Natural killer cell (primary cell): ENCODE measurements at regions of chr22 and their contacts with region 1.

Region 1: DNA sequence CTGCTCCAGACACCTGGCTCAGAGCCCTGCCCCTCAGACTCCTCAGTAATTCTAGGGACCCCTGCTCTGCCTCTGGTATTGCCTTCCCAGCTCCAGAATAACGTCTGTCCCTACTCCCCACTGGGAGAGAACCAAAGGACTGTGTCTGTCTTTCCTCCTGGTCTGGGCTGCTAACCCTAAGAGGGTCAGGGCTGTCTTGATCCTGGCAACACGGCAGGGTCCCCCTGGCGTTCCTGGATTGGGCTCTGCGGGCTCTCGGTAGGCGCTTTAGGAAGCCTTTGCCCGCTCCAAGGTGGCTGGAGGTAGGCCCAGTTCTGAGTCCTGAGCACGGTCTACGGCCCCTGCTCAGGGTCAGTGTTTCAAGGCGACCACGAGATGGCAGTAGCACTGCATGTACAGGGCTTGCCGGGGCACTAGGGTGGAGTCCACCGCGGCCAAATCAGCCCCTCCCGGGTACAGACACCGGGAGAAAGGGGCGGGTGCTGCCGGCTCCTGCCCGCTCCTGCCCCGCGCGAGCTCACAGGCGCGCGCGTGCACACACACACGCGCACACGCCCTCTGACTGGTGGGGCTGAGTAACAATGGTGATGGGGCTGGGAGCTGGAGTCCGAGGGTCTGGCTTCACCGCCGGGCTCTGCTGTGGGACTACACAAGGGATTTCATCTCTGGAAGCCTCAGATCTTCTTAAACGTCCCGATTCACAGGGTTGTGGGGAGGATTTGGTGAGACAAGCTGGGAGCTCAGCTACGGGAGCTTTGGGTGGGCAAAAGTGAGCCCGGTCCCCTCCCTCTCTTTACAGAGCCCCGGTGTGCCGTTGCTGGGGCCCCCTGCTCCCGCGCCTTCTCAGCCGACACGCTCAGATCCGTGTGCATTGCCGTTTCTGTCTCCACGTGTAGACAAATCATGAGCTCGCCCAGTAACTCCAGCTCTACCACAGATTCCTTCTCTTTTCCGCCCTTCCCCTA is 30.1 kb upstream of the HMOX1 start:
- DNase-seq: peak; percentile 77 to 92
- ATAC-seq: peak; percentile 91 to 93 (median 92)
- H3K4me3 ChIP-seq: peak overlapping the region; percentile 39
- H3K4me3 Mint-ChIP-seq: peak overlapping the region; percentile 79
- H3K27ac ChIP-seq: peak overlapping the region; percentile 18
- H3K27ac Mint-ChIP-seq: peak overlapping the region in 1 of 2 donors; percentile 72
- H3K4me1 ChIP-seq: peaks cover 38% of the 10 kb centered on the region
- H3K4me1 Mint-ChIP-seq: peaks cover 16 to 27% of the 10 kb centered on the region in 2 donors
- H3K27me3 ChIP-seq: peaks cover 3% of the 10 kb centered on the region
- H3K27me3 Mint-ChIP-seq: peaks cover 0 to 10% of the 10 kb centered on the region in 2 donors
- CTCF ChIP-seq: peak; percentile 88

Region 2: DNA sequence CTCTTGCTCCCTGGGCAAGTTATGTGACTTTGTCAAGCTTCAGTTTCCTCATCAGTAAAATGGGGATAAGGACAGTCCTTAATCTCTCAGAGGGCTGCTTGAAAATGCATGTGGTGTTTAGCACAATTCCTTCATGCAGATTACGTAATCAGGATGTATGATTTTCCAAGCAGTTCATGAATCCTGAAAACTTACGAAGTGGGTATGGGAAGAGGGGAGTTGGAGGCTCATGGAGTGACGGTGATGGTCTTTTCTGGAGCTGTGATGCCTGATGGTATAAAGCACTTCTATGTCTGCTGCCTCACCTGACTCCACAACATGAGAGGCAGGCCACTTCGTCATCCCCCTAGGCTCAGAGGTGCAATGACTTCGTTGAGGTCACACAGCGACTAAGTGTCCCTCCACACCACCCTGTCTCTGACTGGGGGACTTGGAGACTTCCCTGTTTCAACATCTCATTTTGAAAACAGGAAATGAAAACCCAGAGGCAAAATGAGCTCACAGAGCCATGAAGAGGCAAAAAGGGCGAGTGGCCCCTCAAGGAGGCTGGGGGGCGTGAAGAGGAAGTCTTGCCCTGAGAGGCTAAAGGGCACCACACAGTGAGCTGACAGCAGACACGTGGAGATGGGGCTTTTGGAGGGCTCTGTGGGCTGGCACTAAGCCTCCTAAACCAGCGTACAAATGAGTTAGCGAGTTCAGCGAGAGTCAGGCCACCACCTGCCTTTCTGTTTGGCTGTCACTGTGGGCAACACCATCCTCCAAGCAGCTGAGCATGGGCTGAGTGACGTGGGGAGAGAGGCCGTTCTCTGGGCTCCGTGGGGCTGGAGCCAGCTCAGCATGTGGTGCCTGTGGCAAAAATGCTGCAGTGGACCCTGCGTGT is 59.2 kb after region 1 on chr22:
- intact Hi-C with region 1: loop called (anchors 5 kb)
- DNase-seq: peak; percentile 27 to 46
- ATAC-seq: peak; percentile 84 to 91 (median 84)
- H3K4me3 ChIP-seq: no peak overlapping the region
- H3K4me3 Mint-ChIP-seq: peak overlapping the region; percentile 31
- H3K27ac ChIP-seq: peak overlapping the region; percentile 87
- H3K27ac Mint-ChIP-seq: peak overlapping the region; percentile 62 to 71
- H3K4me1 ChIP-seq: peaks cover 24% of the 10 kb centered on the region
- H3K4me1 Mint-ChIP-seq: peaks cover 6 to 21% of the 10 kb centered on the region in 2 donors
- H3K27me3 ChIP-seq: no peaks in the 10 kb centered on the region
- H3K27me3 Mint-ChIP-seq: no peaks in the 10 kb centered on the region
- CTCF ChIP-seq: no peak

Region 3: GRCh38 chr22:35582861-35583670 is 232.2 kb after region 1 on chr22:
- intact Hi-C with region 1: loop called (anchors 1 kb)
- DNase-seq: peak; percentile 44 to 83
- ATAC-seq: peak; percentile 60 to 82 (median 71)
- H3K4me3 ChIP-seq: no peak overlapping the region
- H3K4me3 Mint-ChIP-seq: no peak overlapping the region
- H3K27ac ChIP-seq: no peak overlapping the region
- H3K27ac Mint-ChIP-seq: no peak overlapping the region
- H3K4me1 ChIP-seq: no peaks in the 10 kb centered on the region
- H3K4me1 Mint-ChIP-seq: peaks cover 0 to 4% of the 10 kb centered on the region in 2 donors
- H3K27me3 ChIP-seq: no peaks in the 10 kb centered on the region
- H3K27me3 Mint-ChIP-seq: peaks cover 0 to 2% of the 10 kb centered on the region in 2 donors
- CTCF ChIP-seq: peak; percentile 95

Region 4: DNA sequence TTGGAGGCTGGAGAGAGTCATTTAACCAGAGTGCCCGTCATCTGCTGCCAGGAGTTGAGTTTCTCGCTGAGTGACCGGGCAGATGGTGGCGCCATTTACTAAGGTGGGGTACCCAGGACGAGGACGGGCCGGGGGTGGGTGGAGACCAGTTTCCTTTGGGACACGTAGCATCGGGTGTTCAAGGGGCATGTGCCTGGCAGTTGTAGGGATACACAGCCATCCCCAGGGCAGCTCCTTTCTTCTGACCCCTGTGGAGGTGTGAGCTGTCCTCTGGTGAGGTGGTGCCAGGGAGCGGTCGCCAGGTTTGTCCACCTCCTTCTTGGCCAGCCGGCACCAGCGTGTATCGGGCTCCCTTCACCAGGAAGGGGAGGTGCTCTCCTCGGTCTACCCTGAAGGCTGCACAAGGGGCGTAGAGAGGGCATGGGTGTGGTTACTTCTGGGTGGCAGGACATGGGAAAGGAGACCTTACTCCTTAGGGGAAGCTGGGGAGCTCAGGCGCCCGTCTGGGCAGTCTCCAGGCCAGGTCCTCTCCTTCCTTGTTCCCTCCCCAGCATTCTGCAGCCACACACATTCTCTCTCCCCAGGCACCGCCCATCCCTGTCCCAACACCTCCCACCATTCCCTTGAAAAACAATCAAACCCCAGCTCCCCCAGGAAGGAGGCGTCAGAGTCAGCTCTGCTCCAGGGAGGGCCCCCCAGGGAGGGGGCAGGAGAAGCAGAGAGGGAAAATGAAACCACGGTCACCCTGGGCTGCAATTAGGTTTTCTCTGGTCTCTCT is 276.6 kb after region 1 on chr22:
- intact Hi-C with region 1: loop called (anchors 1 kb)
- DNase-seq: peak; percentile 40 to 73
- ATAC-seq: peak; percentile 50 to 54 (median 51)
- H3K4me3 ChIP-seq: peak overlapping the region; percentile 42
- H3K4me3 Mint-ChIP-seq: peak overlapping the region; percentile 79
- H3K27ac ChIP-seq: no peak overlapping the region
- H3K27ac Mint-ChIP-seq: peak overlapping the region in 1 of 2 donors; percentile 81
- H3K4me1 ChIP-seq: peaks cover 23% of the 10 kb centered on the region
- H3K4me1 Mint-ChIP-seq: peaks cover 20 to 32% of the 10 kb centered on the region in 2 donors
- H3K27me3 ChIP-seq: no peaks in the 10 kb centered on the region
- H3K27me3 Mint-ChIP-seq: peaks cover 0 to 6% of the 10 kb centered on the region in 2 donors
- CTCF ChIP-seq: peak; percentile 17

Region 5: DNA sequence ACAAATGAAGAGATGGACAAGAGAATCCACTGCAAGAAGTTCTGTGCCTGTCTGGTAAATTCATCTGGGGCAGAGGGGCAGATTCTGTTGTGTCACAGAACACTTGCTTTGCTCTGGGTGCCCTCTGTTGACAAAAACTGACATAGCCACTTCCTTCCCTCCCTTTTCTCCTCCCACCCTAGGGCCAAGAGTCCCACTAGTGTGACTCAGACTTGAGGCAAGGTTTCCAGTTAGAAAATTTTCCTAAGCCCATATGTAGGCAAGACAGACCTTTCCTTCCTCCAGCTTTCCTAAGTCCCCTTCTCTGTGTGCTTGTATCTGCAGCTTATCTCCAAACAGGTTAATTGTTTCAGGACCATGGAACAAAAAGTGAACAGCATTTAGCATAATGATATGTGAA is 571.0 kb after region 1 on chr22:
- intact Hi-C with region 1: loop called (anchors 10 kb)
- DNase-seq: peak in 1 of 2 donors; percentile 58
- ATAC-seq: peak in 2 of 3 donors; percentile 68 to 74
- H3K4me3 ChIP-seq: no peak overlapping the region
- H3K4me3 Mint-ChIP-seq: no peak overlapping the region
- H3K27ac ChIP-seq: no peak overlapping the region
- H3K27ac Mint-ChIP-seq: no peak overlapping the region
- H3K4me1 ChIP-seq: no peaks in the 10 kb centered on the region
- H3K4me1 Mint-ChIP-seq: no peaks in the 10 kb centered on the region
- H3K27me3 ChIP-seq: peaks cover 2% of the 10 kb centered on the region
- H3K27me3 Mint-ChIP-seq: peaks cover 0 to 3% of the 10 kb centered on the region in 2 donors
- CTCF ChIP-seq: peak; percentile 50

Region 6: GRCh38 chr22:36123673-36124630 is 773.1 kb after region 1 on chr22:
- intact Hi-C with region 1: loop called (anchors 1 kb)
- DNase-seq: peak; percentile 90 to 99
- ATAC-seq: peak; percentile 99
- H3K4me3 ChIP-seq: peak overlapping the region; percentile 44
- H3K4me3 Mint-ChIP-seq: peak overlapping the region; percentile 95
- H3K27ac ChIP-seq: peak overlapping the region; percentile 75
- H3K27ac Mint-ChIP-seq: peak overlapping the region; percentile 88 to 93
- H3K4me1 ChIP-seq: peaks cover 12% of the 10 kb centered on the region
- H3K4me1 Mint-ChIP-seq: peaks cover 8% of the 10 kb centered on the region in 2 donors
- H3K27me3 ChIP-seq: no peaks in the 10 kb centered on the region
- H3K27me3 Mint-ChIP-seq: peaks cover 0 to 3% of the 10 kb centered on the region in 2 donors
- CTCF ChIP-seq: peak; percentile 97